AG04450 (cell line): ENCODE measurements at regions of chr11 and their contacts with region 1.

Region 1: DNA sequence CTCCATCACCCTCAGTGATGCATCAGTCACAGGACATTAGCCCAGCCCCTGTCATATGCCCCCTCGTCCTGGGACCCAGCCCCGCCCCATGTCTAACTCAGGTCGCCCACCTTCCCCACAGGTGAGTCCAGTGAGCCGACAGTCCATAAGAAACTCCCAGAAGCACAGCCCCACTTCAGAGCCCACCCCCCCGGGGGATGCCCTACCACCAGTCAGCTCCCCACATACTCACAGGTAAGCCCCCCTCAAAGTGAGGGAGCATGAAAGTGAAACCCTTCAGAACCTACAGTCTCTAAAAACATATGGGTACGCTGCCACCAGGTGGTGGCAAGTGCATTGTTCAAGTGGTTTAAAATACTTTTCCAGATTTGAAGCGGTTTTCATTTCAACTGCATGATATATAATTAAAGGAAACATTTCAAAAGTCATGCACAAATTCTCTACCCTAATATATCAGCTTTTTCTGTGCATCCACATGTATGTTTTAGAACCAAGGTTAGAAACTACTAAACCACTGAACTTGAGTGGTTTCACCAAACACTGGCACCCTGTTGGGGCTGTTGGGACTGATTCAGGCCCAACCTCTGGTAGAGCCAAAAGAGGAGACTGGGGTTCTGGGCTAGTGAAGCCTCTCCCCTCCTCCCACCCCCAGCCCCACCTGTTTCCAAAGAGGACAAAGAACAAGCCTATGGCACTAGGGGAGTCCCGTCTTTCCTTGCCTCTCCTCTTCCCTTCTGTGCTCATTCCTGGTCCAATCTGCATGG is 17.3 kb downstream of the EPS8L2 start:
- DNase-seq: no peak
- H3K4me3 ChIP-seq: no peak overlapping the region
- H3K27ac ChIP-seq: no peak overlapping the region
- H3K27me3 ChIP-seq: peaks cover 30% of the 10 kb centered on the region
- CTCF ChIP-seq: peak; percentile 69

Region 2: GRCh38 chr11:706957-707816 is 16.1 kb before region 1 on chr11:
- CTCF ChIA-PET with region 1: interaction called, 6 read pairs
- POLR2A ChIA-PET with region 1: interaction called, 10 read pairs
- DNase-seq: no peak
- H3K4me3 ChIP-seq: peak overlapping the region; percentile 67
- H3K27ac ChIP-seq: peak overlapping the region; percentile 31
- H3K27me3 ChIP-seq: no peaks in the 10 kb centered on the region
- CTCF ChIP-seq: no peak